ENCODE measurements at regions of chr15 and their contacts with region 1.

Region 1: DNA sequence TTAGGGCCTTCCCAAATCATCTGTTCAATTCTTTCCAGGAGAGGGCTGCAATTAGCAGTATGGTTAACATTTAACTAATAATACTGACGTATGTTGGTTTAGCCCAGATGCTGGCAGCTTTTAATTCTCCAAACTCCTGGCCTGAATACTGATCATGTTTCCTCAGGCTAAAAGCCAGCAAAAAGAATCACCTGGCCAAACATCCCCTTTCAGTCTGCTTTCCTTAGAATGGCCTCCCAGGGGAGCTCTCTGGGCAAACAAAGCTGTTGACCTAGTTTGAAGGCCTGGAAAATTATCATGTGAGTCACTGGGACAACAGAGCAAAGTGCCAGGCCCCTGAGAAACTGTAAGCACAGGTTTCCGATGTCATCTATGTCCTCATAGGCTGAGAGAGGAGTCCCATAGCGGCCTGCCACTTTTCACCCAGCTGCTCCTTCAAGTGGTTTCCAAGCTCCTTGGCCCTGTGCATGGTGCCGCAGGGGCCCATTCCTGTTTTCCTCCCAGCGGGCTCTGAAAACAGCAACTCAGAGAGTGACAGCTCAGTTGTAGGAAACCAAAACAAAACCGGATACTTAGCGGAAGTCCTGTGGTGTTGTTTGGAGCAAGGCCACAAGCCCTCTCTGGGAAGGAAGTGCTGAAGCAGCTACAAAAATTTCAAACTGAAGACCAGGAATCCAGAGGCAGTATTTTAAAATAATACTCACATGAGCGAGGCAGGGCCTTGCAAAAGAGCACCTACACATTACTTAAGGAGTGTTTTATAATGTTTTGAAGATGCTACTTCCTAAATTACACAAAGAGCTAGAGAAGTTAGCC is 36.5 kb upstream of the RAB11A start:
- DNase-seq: peak; percentile 60
- ATAC-seq: peak; percentile 62
- H3K4me3 Mint-ChIP-seq: peak overlapping the region; percentile 66
- H3K27ac Mint-ChIP-seq: peak overlapping the region; percentile 96
- H3K4me1 Mint-ChIP-seq: peaks cover 43% of the 10 kb centered on the region
- H3K27me3 Mint-ChIP-seq: no peaks in the 10 kb centered on the region
- CTCF ChIP-seq: no peak

Region 2: GRCh38 chr15:65818927-65819562 is 13.7 kb before region 1 on chr15:
- CTCF ChIA-PET with region 1: interaction called, 8 read pairs
- POLR2A ChIA-PET with region 1: interaction called, 14 read pairs
- intact Hi-C with region 1: no loop called
- DNase-seq: no peak
- ATAC-seq: peak; percentile 85
- H3K4me3 Mint-ChIP-seq: peak overlapping the region; percentile 4
- H3K27ac Mint-ChIP-seq: peak overlapping the region; percentile 92
- H3K4me1 Mint-ChIP-seq: peaks cover 55% of the 10 kb centered on the region
- H3K27me3 Mint-ChIP-seq: no peaks in the 10 kb centered on the region
- CTCF ChIP-seq: no peak

Region 3: GRCh38 chr15:65875458-65875857 is 42.7 kb after region 1 on chr15:
- CTCF ChIA-PET with region 1: no interaction called
- POLR2A ChIA-PET with region 1: no interaction called
- intact Hi-C with region 1: no loop called
- DNase-seq: no peak
- ATAC-seq: no peak
- H3K4me3 Mint-ChIP-seq: no peak overlapping the region
- H3K27ac Mint-ChIP-seq: peak overlapping the region; percentile 46
- H3K4me1 Mint-ChIP-seq: peaks cover 34% of the 10 kb centered on the region
- H3K27me3 Mint-ChIP-seq: no peaks in the 10 kb centered on the region
- CTCF ChIP-seq: no peak

Measured in activated CD8-positive, alpha-beta T cell treated with anti-CD3 and anti-CD28 coated beads for 36 hours (primary cell).